Activated CD8-positive, alpha-beta T cell treated with anti-CD3 and anti-CD28 coated beads, Interleukin-2, amount 10 ng/mL, durations not matched to agents 7 days and 5 days (primary cell): ENCODE measurements at regions of chrX and their contacts with region 1.

Region 1: GRCh38 chrX:119791438-119792231 is at the start of gene RPL39:
- DNase-seq: peak; percentile 88
- ATAC-seq: peak; percentile 94
- H3K4me3 Mint-ChIP-seq: peak within 1 kb of the TSS; percentile 95
- H3K27ac Mint-ChIP-seq: peak within 1 kb of the TSS; percentile 94
- H3K4me1 Mint-ChIP-seq: peaks cover 30% of the 10 kb centered on the region
- H3K27me3 Mint-ChIP-seq: no peaks in the 10 kb centered on the region
- total RNA-seq, gene RPL39: 1,775 to 1,899 TPM

Region 2: GRCh38 chrX:119693040-119693995 is 98.3 kb before region 1 on chrX and contains the start of gene SEPTIN6:
- CTCF ChIA-PET with region 1: no interaction called
- POLR2A ChIA-PET with region 1: interaction called, 12 read pairs
- DNase-seq: peak; percentile 91
- ATAC-seq: peak; percentile 80
- H3K4me3 Mint-ChIP-seq: peak within 1 kb of the TSS; percentile 92
- H3K27ac Mint-ChIP-seq: peak within 1 kb of the TSS; percentile 99
- H3K4me1 Mint-ChIP-seq: peaks cover 16% of the 10 kb centered on the region
- H3K27me3 Mint-ChIP-seq: no peaks in the 10 kb centered on the region
- total RNA-seq, gene SEPTIN6: 303 to 312 TPM

Region 3: DNA sequence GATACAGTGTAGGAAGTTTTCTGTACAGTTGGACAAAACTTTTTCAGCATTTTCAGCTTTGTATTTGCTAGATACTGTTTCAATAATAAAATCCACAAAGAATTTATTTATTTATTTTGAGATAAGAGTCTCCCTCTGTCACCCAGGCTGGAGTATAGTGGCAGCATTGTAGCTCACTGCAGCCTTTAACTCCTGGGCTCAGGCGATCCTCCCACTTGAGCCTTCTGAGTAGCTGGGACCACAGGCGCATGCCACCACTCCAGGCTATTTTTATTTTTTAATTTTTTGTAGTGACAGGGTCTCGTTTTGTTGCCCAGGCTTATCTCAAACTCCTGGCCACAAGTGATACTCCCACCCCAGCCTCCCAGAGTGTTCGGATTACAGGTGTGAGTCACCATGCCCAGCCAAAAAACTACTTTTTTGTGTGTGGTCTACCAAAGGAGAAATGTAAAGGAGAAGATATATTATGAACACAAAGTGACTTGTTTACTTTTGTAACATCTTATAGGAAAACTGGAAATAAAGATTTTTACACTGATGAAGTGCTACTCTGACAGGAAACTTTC is 46.3 kb before region 1 on chrX:
- CTCF ChIA-PET with region 1: no interaction called
- POLR2A ChIA-PET with region 1: no interaction called
- DNase-seq: no peak
- ATAC-seq: no peak
- H3K4me3 Mint-ChIP-seq: no peak overlapping the region
- H3K27ac Mint-ChIP-seq: no peak overlapping the region
- H3K4me1 Mint-ChIP-seq: peaks cover 5% of the 10 kb centered on the region
- H3K27me3 Mint-ChIP-seq: no peaks in the 10 kb centered on the region

Region 4: DNA sequence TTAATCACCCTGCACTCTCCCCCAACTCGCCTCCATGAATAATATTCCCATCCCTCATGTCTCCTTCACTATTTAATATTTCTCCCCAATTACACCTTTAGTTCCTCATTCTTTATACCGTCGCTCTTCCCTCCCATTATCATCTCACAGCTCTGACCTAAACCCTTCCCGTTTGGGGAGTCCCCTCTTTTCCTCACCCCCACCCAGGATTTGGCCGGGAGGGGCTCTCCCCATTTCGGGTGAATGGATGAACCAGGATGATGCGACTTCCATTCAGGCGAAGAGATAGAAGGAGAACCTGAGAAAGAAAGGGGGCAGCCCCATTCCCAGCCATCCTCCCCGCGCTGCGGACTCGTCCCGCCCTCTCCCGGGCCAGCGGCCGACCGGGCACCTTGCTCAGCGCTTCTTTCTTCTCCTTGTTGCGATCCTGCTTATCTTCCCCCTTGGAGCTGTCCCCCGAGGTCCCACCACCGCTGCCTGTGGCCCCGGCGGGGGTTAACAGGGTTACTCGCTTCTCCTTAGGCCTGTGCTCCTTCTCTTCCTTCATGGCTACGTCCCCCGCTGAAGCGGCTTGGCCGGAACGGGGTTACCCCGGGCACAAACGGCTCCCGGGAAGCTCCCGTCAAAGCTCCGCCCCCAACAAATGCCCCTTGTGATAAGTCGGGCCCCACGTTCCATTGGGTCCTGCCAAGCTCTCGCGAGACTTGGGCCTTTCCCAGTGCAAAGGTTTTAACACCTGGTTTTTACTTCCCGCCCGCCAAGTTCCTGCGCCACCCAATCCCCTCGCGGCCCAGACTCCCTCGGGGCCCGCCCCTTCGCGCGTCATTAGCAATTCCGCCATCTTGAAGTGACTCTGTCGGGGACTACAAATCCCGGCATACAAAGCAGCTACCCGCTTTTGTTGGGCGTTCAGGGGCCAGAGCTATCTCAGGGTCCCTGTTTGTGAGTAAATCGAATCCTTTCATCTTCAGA is 61.0 kb after region 1 on chrX and contains the start of gene UPF3B:
- CTCF ChIA-PET with region 1: interaction called, 10 read pairs
- POLR2A ChIA-PET with region 1: interaction called, 10 read pairs
- DNase-seq: peak; percentile 96
- ATAC-seq: peak; percentile 98
- H3K4me3 Mint-ChIP-seq: peak within 1 kb of the TSS; percentile 88
- H3K27ac Mint-ChIP-seq: peak within 1 kb of the TSS; percentile 88
- H3K4me1 Mint-ChIP-seq: peaks cover 13% of the 10 kb centered on the region
- H3K27me3 Mint-ChIP-seq: peaks cover under 1% of the 10 kb centered on the region
- total RNA-seq, gene UPF3B: 10.3 to 10.9 TPM

Region 5: DNA sequence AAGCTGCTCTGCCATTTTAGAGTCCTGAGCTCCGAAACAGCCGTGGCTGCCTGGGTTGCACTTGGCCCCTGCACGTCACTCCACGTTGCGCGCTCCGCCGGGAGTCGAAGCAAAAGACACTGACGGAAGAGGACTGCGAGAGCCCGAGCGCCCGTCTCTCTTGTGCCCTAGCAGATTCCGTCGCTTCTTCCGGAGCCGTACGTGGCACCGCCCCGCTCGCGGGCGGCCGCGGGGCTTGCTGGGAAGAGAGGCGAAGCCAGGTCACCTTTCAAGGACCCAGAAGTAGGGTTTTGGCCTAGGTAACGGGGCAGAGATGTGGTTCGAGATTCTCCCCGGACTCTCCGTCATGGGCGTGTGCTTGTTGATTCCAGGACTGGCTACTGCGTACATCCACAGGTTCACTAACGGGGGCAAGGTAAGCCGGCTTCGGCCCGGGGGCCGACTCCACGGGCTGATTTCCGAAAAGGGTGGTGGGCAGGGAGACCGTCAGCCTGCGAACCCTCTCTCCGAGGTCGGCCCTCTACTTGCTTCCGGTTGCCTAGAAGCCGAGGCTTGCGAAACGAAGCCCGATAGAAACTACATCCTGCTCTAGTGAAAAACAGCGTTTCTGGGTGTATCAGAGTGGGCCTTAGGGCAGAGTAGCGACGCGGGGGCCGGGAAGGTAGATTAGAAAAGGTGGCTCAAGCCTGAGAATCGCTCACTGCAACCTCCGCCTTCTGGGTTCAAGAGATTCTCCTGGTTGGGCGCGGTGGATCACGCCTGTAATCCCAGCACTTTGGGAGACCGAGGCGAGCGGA is 80.2 kb after region 1 on chrX and contains the starts of genes NDUFA1 and RNF113A:
- CTCF ChIA-PET with region 1: interaction called, 8 read pairs
- POLR2A ChIA-PET with region 1: interaction called, 27 read pairs
- DNase-seq: peak; percentile 89
- ATAC-seq: peak; percentile 93
- H3K4me3 Mint-ChIP-seq: peak within 1 kb of the TSS; percentile 98
- H3K27ac Mint-ChIP-seq: peak within 1 kb of the TSS; percentile 100
- H3K4me1 Mint-ChIP-seq: peaks cover 12% of the 10 kb centered on the region
- H3K27me3 Mint-ChIP-seq: no peaks in the 10 kb centered on the region
- total RNA-seq, gene NDUFA1: 110 to 111 TPM
- total RNA-seq, gene RNF113A: 29.1 to 29.5 TPM